PC-3 (cell line): ENCODE measurements at regions of chr19 and their contacts with region 1.

Region 1: GRCh38 chr19:48842789-48843162 is 6.5 kb upstream of the HSD17B14 start:
- DNase-seq: peak; percentile 64
- ATAC-seq: peak; percentile 31; the same call in 1 of the 2 replicates
- H3K4me3 ChIP-seq: no peak overlapping the region
- H3K27ac ChIP-seq: no peak overlapping the region
- H3K4me1 ChIP-seq: no peaks in the 10 kb centered on the region
- H3K27me3 ChIP-seq: no peaks in the 10 kb centered on the region
- CTCF ChIP-seq: peak; percentile 80

Region 2: GRCh38 chr19:48646001-48646721 is 196.6 kb before region 1 on chr19 and contains the start of gene CA11:
- CTCF ChIA-PET with region 1: no interaction called
- POLR2A ChIA-PET with region 1: no interaction called
- intact Hi-C with region 1: loop called (anchors 2 kb)
- DNase-seq: peak; percentile 81
- ATAC-seq: peak; percentile 84
- H3K4me3 ChIP-seq: peak within 1 kb of the TSS; percentile 70
- H3K27ac ChIP-seq: no peak within 1 kb of the TSS
- H3K4me1 ChIP-seq: peaks cover 6% of the 10 kb centered on the region; the same call in 1 of the 2 replicates
- H3K27me3 ChIP-seq: no peaks in the 10 kb centered on the region
- CTCF ChIP-seq: peak; percentile 69
- total RNA-seq, gene CA11: 0.63 and 4.1 TPM in 2 replicates

Region 3: DNA sequence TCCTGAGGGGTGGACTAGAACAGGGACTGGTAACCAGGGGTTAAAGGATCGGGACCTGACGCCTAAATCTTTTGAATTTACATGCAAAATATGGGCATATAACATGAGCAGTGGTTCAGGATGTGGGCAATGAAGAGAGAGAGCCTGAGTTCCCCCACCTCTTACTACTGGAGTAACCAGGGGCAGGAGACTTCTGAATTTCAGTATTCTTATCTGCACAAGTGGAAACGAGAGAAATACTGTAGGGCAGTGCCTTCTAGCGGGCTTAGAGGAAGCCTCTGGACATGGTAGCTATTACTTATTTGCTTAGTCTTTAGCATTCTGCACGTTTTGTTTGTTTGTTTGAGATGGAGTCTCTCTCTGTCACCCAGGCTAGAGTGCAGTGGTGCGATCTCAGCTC is 58.2 kb before region 1 on chr19:
- CTCF ChIA-PET with region 1: interaction called, 8 read pairs
- POLR2A ChIA-PET with region 1: no interaction called
- intact Hi-C with region 1: loop called (anchors 1 kb)
- DNase-seq: peak; percentile 20
- ATAC-seq: no peak
- H3K4me3 ChIP-seq: no peak overlapping the region
- H3K27ac ChIP-seq: no peak overlapping the region
- H3K4me1 ChIP-seq: no peaks in the 10 kb centered on the region
- H3K27me3 ChIP-seq: no peaks in the 10 kb centered on the region
- CTCF ChIP-seq: no peak; the same call in 1 of the 2 replicates